Left cardiac atrium (tissue), 4 donors: ENCODE measurements at regions of chr6 and their contacts with region 1.

Region 1: GRCh38 chr6:111642463-111643158 is 36.9 kb upstream of the TRAF3IP2 start:
- DNase-seq: peak; percentile 64
- ATAC-seq: peak; percentile 89 to 93

Region 2: DNA sequence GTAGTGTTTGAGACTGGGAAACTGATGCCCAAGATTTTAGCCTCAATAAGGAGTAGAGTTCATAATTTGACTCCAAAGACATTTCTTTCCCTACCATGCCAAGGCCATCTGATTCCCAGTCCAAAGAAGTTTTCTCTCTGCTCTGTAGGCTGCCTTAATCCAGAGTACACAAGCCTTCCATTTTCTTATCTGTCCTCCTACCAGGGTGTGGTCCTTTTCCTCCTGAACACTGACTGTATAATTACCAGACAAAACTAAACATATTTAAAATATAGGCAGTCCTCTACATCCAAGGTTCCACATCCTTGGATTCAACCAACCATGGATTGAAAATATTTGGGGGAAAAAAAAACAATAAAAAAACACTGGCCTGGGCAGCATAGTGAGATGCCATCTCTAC is 447.0 kb before region 1 on chr6:
- intact Hi-C with region 1: no loop called
- DNase-seq: no peak
- ATAC-seq: no peak

Region 3: DNA sequence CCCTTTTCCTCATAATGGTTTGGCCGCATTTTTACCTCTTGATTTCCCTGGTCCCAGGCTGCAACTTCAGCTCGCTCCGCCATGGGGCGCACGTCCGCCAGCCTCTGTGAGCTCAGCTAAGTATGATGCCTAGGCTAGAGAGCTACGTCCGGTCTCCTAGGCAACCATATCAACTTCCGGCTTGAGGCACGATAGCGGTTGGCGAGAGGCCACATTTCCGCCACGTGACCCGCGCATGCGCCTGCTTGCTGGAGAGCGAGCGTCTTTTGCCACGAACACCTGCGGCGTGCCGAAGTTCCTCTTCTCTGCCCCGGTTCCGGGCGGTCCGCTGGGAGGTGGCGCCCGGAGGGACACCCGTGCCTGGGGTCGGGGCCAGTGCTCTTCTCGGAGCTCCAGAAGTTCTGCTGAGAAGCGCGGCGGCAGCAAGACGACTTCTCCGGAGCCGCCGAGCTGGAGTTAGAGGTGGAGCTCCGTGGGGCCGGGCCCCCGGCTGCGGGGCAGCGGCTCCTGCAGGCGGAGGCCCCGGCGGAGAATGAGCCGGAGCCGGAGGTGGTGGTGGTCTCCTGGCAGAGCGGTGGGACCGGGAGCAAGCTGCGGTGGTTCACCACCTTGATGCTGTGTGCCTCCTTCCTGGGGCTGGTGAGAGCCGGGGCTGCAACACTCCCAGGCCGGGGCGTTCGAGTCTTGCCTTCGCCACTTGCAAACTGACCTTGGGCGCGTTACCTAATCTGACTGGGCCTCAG is 383.4 kb before region 1 on chr6:
- intact Hi-C with region 1: loop called in 1 of 2 experiments (anchors 10 kb)
- DNase-seq: peak; percentile 99
- ATAC-seq: peak; percentile 98 to 99

Region 4: DNA sequence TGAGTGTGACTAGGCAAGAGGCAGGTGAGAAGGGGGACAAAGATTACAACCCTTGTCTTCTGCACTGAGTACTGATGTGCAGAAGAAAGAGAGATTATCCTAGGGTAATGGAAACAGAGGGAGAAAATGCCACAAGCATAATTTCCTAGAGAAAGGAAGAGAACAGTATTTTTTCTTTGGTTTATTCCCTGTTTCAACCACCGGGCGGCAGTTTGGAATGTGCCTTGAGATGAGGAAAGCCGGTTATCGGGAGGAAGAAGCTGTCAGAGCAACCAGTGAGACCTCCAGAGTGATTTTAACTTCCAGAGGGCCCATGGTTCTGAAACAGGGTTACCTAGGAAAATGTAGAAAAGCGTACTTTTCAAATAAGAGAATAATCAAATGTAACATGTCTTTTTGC is 281.0 kb before region 1 on chr6:
- intact Hi-C with region 1: loop called in 1 of 2 experiments (anchors 10 kb)
- DNase-seq: peak; percentile 42
- ATAC-seq: peak; percentile 47 to 68

Region 5: DNA sequence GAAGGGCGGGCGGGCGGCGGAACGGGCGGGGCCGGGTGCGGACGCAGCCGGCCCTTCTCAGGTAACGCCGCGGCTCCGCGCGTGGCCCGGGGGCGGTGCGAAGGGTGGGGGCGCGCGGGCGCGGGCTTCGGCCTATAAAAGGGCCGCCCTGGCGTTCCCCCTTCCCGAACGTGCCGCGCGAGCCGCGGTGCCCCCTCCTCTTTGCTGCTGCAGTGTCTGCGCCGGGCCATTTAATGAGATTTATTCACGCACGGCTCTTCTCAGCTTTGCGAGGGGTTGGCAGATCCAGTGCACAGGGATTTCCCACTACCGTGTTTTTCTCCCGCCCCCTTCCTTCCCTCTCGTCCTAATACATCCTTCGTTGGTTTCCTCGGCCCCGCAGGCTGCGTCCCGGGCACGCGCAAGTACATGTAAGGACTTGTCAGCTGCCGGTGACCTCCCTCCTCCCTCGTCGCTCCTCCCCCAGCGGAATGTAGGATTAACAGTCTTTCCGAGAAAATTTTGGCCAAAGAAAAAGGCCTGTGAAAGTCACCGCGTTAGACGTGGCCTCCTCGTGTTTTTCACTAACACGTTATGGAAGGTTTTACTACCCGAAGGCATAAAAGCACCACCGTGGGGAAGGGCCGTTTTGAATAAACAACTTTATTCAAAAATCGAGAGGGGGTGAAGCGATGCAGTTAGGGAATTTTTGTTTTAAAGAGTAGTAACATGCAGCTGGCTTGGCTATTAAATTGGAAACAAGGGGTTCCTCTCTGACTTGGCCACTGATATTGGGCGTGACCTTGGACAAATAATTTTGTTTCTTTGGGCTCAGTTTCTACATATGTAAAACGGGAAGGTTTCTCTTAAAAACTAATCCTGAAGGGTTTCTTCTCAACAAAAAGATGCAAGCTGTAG is 158.6 kb before region 1 on chr6:
- intact Hi-C with region 1: loop called in 1 of 2 experiments (anchors 5 kb)
- DNase-seq: peak; percentile 95
- ATAC-seq: peak; percentile 84 to 92